ENCODE measurements at regions of chr16 and their contacts with region 1.

Region 1: DNA sequence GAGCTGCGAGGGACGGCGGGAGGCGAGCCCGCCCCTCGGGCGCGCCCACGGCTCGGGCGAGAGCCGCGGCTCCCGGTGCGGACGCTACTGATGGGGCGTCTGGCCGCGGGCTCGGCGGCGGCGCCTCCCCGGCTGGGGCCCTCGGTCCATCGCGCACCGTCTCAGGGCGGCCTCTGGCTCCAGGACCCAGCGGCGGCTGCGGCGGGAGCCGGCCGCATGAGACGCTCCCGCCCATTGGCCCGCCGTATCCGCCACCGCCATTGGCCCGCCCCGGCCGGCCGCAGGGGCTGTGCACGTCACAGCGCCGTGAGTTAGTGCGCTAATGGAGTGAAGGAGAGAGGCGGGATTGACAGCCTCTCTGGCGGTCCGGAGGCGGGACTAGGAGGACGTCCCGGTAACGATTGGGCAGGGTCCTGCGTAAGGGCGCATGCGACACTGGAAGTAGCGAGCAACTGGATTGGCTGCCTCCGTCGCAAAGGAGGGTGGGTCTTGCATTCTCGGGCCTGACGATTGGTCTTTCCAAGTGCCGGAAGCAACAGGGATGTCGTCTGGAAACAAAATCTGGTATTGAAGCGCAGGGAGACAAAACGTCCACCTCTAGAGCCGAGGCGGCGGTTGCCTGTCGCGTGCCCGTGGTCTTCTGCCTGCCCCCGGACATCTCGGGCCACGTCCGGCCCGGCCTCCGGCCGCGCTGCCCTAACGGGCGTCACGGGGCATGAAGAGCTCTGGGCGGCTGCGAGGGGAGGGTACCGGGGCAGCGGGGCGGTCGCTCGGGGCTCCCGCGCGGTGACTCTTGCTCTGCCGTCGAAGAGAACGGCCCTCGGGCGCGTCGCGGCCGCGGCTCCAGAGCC is at the start of gene ANKRD11:
- DNase-seq: peak; percentile 99
- ATAC-seq: peak; percentile 93
- H3K4me3 Mint-ChIP-seq: peak within 1 kb of the TSS; percentile 87
- H3K27ac Mint-ChIP-seq: peak within 1 kb of the TSS; percentile 92
- H3K4me1 Mint-ChIP-seq: peaks cover 44% of the 10 kb centered on the region
- H3K27me3 Mint-ChIP-seq: no peaks in the 10 kb centered on the region
- total RNA-seq, gene ANKRD11: 144 to 145 TPM

Region 2: GRCh38 chr16:88803264-88803987 is 687.2 kb before region 1 on chr16 and contains the start of gene CDT1:
- CTCF ChIA-PET with region 1: no interaction called
- POLR2A ChIA-PET with region 1: no interaction called
- intact Hi-C with region 1: loop called in 1 of 2 experiments (anchors 1 kb)
- DNase-seq: peak; percentile 90
- ATAC-seq: peak; percentile 32
- H3K4me3 Mint-ChIP-seq: peak within 1 kb of the TSS; percentile 83
- H3K27ac Mint-ChIP-seq: peak within 1 kb of the TSS; percentile 94
- H3K4me1 Mint-ChIP-seq: peaks cover 24% of the 10 kb centered on the region
- H3K27me3 Mint-ChIP-seq: no peaks in the 10 kb centered on the region
- total RNA-seq, gene CDT1: 136 to 182 TPM

Region 3: DNA sequence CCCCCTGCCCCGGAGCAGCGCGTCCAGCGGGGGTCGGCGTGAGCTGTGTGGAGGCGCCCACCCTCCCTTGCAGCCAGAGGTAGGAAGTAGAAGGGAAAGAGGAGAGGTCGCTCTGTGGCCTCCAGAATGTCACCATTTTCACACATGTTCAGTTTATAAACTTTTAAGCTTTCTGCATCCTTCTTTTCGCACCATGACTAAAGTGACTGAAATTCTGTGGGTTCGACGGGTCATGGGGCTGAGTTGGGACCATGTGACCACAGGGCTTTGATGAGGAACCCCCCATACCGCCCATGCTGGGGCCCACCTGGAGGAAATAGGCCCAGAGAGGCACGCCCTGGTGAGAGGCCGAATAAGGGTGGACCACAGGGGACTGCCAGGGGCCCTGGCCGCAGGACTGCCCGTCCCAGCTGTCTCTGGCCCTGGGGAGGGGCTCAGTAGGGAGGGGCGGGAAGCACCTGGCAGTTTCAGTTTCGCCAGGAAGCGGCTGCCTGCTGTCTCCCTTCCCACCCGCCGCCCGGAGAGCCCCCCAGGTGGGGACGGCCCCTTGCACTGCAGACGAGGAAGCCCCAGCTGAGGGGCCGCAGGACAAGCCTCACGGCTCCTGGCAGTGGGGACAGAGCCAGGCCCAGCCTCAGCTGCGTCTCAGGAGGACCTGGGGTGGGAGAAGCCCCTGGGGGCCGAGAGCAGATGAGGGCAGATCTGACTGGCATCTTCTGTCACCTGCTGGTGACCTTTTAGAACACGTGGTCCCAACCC is 522.6 kb before region 1 on chr16:
- CTCF ChIA-PET with region 1: no interaction called
- POLR2A ChIA-PET with region 1: no interaction called
- intact Hi-C with region 1: no loop called
- DNase-seq: peak; percentile 41
- ATAC-seq: peak; percentile 45
- H3K4me3 Mint-ChIP-seq: no peak overlapping the region
- H3K27ac Mint-ChIP-seq: no peak overlapping the region
- H3K4me1 Mint-ChIP-seq: peaks cover 6% of the 10 kb centered on the region
- H3K27me3 Mint-ChIP-seq: peaks cover 2% of the 10 kb centered on the region

Region 4: DNA sequence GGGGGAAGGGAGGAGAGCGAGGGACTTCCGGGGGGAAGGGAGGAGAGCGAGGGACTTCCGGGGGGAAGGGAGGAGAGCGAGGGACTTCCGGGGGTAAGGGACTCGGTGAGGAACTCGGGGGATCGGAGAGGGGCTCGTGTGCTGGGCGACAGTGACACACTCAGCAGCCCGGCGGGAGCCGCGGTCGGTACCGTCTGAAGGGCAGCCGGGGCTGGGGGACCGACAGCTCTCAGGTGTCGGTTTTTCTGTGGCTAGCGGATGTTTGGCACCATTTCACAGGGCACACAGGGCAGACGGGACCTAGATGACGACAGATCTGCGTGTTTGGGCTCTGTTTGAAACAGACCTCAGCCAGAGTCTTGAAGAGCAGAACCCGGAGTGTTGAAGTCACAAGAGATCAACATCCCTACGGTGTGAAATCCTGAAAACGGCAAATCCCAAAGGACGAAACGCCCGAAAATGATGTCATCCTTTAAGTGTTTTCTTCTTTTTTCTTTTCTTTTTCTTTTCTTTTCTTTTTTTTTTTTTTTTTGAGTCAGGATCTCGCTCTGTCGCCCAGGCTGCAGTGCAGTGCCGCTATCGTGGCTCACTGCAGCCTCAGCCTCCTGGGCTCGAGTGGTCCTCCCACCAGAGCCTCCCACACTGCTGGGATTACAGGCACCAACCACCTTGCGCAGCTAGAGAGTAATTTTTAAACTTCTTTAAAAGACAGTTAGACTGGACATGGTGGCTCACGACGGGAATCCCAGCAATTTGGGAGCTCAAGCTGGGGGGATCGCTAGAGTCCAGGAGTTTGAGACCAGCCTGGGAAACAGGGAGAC is 249.2 kb before region 1 on chr16:
- CTCF ChIA-PET with region 1: interaction called, 5 read pairs
- POLR2A ChIA-PET with region 1: no interaction called
- intact Hi-C with region 1: loop called (anchors 1 to 5 kb)
- DNase-seq: peak; percentile 83
- ATAC-seq: peak; percentile 83
- H3K4me3 Mint-ChIP-seq: peak overlapping the region; percentile 87
- H3K27ac Mint-ChIP-seq: peak overlapping the region; percentile 100
- H3K4me1 Mint-ChIP-seq: peaks cover 14% of the 10 kb centered on the region
- H3K27me3 Mint-ChIP-seq: no peaks in the 10 kb centered on the region

Region 5: GRCh38 chr16:89331371-89332109 is 159.1 kb before region 1 on chr16:
- CTCF ChIA-PET with region 1: interaction called, 3 read pairs
- POLR2A ChIA-PET with region 1: no interaction called
- intact Hi-C with region 1: loop called (anchors 2 to 5 kb)
- DNase-seq: no peak
- ATAC-seq: no peak
- H3K4me3 Mint-ChIP-seq: no peak overlapping the region
- H3K27ac Mint-ChIP-seq: peak overlapping the region; percentile 37
- H3K4me1 Mint-ChIP-seq: peaks cover 88% of the 10 kb centered on the region
- H3K27me3 Mint-ChIP-seq: no peaks in the 10 kb centered on the region

Region 6: DNA sequence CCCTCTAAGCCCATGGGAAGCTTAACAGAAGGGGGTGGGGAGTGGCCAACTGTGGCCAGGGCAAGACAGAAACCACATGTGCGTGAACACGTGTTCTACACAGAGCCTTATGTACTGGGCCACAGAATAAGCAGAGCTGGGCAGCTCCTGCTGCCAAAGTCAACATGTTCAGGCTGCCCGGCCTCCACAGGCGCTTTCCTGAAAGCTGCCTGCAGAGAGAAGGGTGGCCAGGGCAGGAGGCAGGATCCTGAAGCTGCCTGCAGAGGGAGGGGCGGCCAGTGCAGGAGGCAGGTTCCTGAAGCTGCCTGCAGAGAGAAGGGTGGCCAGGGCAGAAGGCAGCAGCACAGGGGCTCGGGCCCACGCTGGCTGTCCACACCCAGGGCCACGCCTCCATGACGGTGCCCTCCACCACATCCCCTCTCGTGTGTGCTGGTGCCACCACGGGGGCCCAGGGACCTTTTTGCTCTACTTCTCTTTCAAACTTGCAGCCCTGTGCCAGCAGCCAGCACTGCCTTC is 79.8 kb before region 1 on chr16:
- CTCF ChIA-PET with region 1: interaction called, 3 read pairs
- POLR2A ChIA-PET with region 1: interaction called, 4 read pairs
- intact Hi-C with region 1: loop called in 1 of 2 experiments (anchors 1 kb)
- DNase-seq: peak; percentile 38
- ATAC-seq: peak; percentile 1
- H3K4me3 Mint-ChIP-seq: no peak overlapping the region
- H3K27ac Mint-ChIP-seq: peak overlapping the region; percentile 68
- H3K4me1 Mint-ChIP-seq: peaks cover 83% of the 10 kb centered on the region
- H3K27me3 Mint-ChIP-seq: no peaks in the 10 kb centered on the region

Region 7: GRCh38 chr16:89560378-89561141 is 69.9 kb after region 1 on chr16 and contains the start of gene RPL13:
- CTCF ChIA-PET with region 1: no interaction called
- POLR2A ChIA-PET with region 1: interaction called, 3 read pairs
- intact Hi-C with region 1: loop called (anchors 1 to 5 kb)
- DNase-seq: peak; percentile 97
- ATAC-seq: peak; percentile 90
- H3K4me3 Mint-ChIP-seq: peak within 1 kb of the TSS; percentile 95
- H3K27ac Mint-ChIP-seq: peak within 1 kb of the TSS; percentile 99
- H3K4me1 Mint-ChIP-seq: peaks cover 46% of the 10 kb centered on the region
- H3K27me3 Mint-ChIP-seq: no peaks in the 10 kb centered on the region
- total RNA-seq, gene RPL13: 2,518 to 3,038 TPM

Region 8: GRCh38 chr16:89623511-89624261 is 133.1 kb after region 1 on chr16:
- CTCF ChIA-PET with region 1: no interaction called
- POLR2A ChIA-PET with region 1: no interaction called
- intact Hi-C with region 1: no loop called
- DNase-seq: no peak
- ATAC-seq: no peak
- H3K4me3 Mint-ChIP-seq: no peak overlapping the region
- H3K27ac Mint-ChIP-seq: no peak overlapping the region
- H3K4me1 Mint-ChIP-seq: no peaks in the 10 kb centered on the region
- H3K27me3 Mint-ChIP-seq: peaks cover 4% of the 10 kb centered on the region

Region 9: GRCh38 chr16:89815639-89816348 is 325.2 kb after region 1 on chr16:
- CTCF ChIA-PET with region 1: no interaction called
- POLR2A ChIA-PET with region 1: no interaction called
- intact Hi-C with region 1: loop called in 1 of 2 experiments (anchors 1 kb)
- DNase-seq: peak; percentile 43
- ATAC-seq: peak; percentile 21
- H3K4me3 Mint-ChIP-seq: peak overlapping the region; percentile 89
- H3K27ac Mint-ChIP-seq: peak overlapping the region; percentile 67
- H3K4me1 Mint-ChIP-seq: peaks cover 44% of the 10 kb centered on the region
- H3K27me3 Mint-ChIP-seq: no peaks in the 10 kb centered on the region

Region 10: DNA sequence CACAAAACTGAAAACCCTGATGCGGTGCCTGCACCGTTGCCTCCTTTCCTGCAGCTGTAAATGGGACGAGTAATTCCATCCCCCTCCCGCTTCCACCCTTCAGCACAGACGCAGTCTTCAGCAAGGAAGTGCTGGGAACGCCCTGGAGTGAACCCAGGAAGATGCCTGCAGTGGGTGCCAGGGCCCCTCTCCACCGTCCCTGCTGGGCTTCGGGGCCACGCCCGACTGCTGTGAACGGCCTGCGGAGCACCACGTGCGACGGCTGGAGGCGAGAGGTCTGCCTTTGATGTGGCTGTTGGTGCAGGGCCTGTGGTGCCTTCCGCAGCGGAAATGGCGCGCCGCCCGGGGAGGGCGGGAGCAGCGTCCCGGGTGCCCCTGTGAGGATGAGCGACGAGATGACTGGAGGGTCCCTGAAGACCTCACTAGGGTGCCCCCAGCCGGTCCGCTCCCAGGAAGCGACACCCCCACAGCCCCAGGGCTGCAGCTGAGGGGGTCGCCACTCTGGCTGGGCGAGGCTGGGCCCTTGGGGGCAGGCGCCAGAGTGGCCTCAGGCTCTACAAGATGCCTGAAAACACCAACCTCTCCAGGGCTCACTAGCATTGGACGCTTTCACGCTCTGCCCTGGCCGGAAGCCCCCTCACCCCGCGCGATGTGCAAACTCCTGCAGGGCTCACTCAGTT is 427.3 kb after region 1 on chr16:
- CTCF ChIA-PET with region 1: no interaction called
- POLR2A ChIA-PET with region 1: no interaction called
- intact Hi-C with region 1: no loop called
- DNase-seq: peak; percentile 89
- ATAC-seq: peak; percentile 75
- H3K4me3 Mint-ChIP-seq: peak overlapping the region; percentile 50
- H3K27ac Mint-ChIP-seq: no peak overlapping the region
- H3K4me1 Mint-ChIP-seq: peaks cover 43% of the 10 kb centered on the region
- H3K27me3 Mint-ChIP-seq: peaks cover 25% of the 10 kb centered on the region